IMR-90 (cell line): ENCODE measurements at regions of chr15 and their contacts with region 1.

Region 1: GRCh38 chr15:67839929-67840748 is at the start of gene RNU6-1:
- DNase-seq: peak; percentile 91
- ATAC-seq: peak; percentile 81
- H3K4me3 ChIP-seq: peak within 1 kb of the TSS; percentile 74
- H3K27ac ChIP-seq: peak within 1 kb of the TSS; percentile 96
- H3K4me1 ChIP-seq: peaks cover 15% of the 10 kb centered on the region; the same call in 1 of the 2 replicates
- H3K27me3 ChIP-seq: peaks cover 23% of the 10 kb centered on the region
- CTCF ChIP-seq: no peak
- POLR2A ChIP-seq: peak; percentile 49; the same call in 1 of the 2 replicates
- RAD21 ChIP-seq: no peak
- total RNA-seq, gene RNU6-1: not detected in 2 replicates

Region 2: DNA sequence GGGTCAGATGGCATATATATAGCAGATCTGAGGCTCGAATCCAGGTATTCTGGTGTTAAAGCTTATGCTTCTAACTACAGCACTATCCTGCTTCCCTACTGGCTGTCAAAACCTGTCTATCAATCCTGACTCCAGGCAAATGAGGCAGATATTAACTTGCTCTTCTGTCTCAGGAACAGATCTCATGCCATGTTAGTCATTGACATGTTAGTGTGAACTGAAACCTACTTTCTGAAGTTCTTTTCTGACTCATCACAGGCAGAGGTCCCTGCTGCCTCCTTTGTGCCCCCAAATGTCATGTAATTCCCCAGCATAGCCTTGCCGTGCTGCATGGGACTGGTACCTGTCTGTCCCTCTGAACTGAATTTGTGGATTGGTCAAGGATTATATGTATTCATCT is 899.8 kb before region 1 on chr15:
- CTCF ChIA-PET with region 1: no interaction called
- POLR2A ChIA-PET with region 1: no interaction called
- dilution Hi-C with region 1: no loop called
- in situ Hi-C with region 1: loop called (anchors 5 kb)
- intact Hi-C with region 1: no loop called
- DNase-seq: peak; percentile 62
- ATAC-seq: no peak; the same call in 1 of the 2 replicates
- H3K4me3 ChIP-seq: no peak overlapping the region
- H3K27ac ChIP-seq: no peak overlapping the region
- H3K4me1 ChIP-seq: peaks cover 13% of the 10 kb centered on the region; the same call in 1 of the 2 replicates
- H3K27me3 ChIP-seq: no peaks in the 10 kb centered on the region
- CTCF ChIP-seq: no peak
- POLR2A ChIP-seq: no peak
- RAD21 ChIP-seq: no peak

Region 3: GRCh38 chr15:67196672-67197363 is 643.3 kb before region 1 on chr15:
- CTCF ChIA-PET with region 1: no interaction called
- POLR2A ChIA-PET with region 1: no interaction called
- dilution Hi-C with region 1: no loop called
- in situ Hi-C with region 1: no loop called
- intact Hi-C with region 1: loop called (anchors 5 kb)
- DNase-seq: peak; percentile 93
- ATAC-seq: peak; percentile 44
- H3K4me3 ChIP-seq: no peak overlapping the region
- H3K27ac ChIP-seq: peak overlapping the region; percentile 72
- H3K4me1 ChIP-seq: peaks cover 41% of the 10 kb centered on the region
- H3K27me3 ChIP-seq: no peaks in the 10 kb centered on the region
- CTCF ChIP-seq: no peak
- POLR2A ChIP-seq: peak; percentile 56; the same call in 1 of the 2 replicates
- RAD21 ChIP-seq: no peak

Region 4: GRCh38 chr15:67456677-67457529 is 383.2 kb before region 1 on chr15:
- CTCF ChIA-PET with region 1: interaction called, 7 read pairs
- POLR2A ChIA-PET with region 1: interaction called, 14 read pairs
- dilution Hi-C with region 1: no loop called
- in situ Hi-C with region 1: loop called (anchors 5 kb)
- intact Hi-C with region 1: loop called (anchors 1 kb)
- DNase-seq: peak; percentile 59
- ATAC-seq: peak; percentile 97
- H3K4me3 ChIP-seq: no peak overlapping the region
- H3K27ac ChIP-seq: no peak overlapping the region
- H3K4me1 ChIP-seq: no peaks in the 10 kb centered on the region
- H3K27me3 ChIP-seq: peaks cover 15% of the 10 kb centered on the region
- CTCF ChIP-seq: peak; percentile 80
- POLR2A ChIP-seq: no peak
- RAD21 ChIP-seq: peak; percentile 81

Region 5: GRCh38 chr15:68053701-68054627 is 213.8 kb after region 1 on chr15 and contains the start of gene PIAS1:
- CTCF ChIA-PET with region 1: no interaction called
- POLR2A ChIA-PET with region 1: no interaction called
- dilution Hi-C with region 1: no loop called
- in situ Hi-C with region 1: no loop called
- intact Hi-C with region 1: loop called (anchors 1 kb)
- DNase-seq: peak; percentile 83
- ATAC-seq: peak; percentile 98
- H3K4me3 ChIP-seq: peak within 1 kb of the TSS; percentile 88
- H3K27ac ChIP-seq: peak within 1 kb of the TSS; percentile 57
- H3K4me1 ChIP-seq: no peaks in the 10 kb centered on the region; the same call in 1 of the 2 replicates
- H3K27me3 ChIP-seq: no peaks in the 10 kb centered on the region; the same call in 1 of the 2 replicates
- CTCF ChIP-seq: no peak
- POLR2A ChIP-seq: peak; percentile 74
- RAD21 ChIP-seq: no peak
- total RNA-seq, gene PIAS1: 41.1 and 63.6 TPM in 2 replicates

Region 6: DNA sequence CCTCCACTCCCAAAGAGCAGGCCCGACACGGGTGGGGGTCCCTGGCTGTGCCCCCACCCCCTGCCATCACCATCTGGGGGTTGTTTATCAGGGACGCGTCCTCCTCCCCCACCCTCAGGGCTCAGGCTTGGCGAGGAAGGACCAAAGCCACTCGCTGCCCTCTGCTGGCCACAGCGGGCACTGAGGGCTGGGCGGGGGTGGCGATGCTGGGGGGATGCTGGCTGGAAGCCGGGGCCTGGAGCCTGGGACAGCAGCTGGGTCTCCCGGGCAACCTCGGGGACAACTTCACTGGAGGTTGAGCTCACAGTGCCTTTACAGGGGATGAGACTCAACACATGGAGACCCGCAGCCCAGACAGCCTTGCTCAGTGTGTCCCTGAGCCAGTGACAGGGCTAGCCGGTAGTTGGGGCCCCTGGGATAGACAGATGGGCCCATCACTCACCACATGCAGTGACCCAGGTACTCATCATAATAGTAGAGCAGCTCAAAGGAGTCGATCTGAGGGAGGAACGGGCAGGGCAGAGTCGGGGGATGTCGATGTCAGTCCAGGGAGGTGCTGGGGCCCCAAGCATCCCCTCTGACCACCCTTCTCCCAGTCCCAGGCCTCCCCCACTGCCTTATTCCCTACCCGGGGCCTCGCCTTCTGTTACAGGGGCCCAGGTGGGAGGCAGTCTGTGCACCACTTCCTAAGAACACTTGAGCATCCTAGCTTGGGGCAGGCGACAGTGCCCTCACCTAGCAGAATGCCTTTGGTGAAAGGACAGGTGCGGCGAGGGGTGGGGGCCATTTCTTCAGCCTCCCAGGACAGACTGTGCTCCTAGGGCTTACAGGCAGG is 370.9 kb after region 1 on chr15:
- CTCF ChIA-PET with region 1: no interaction called
- POLR2A ChIA-PET with region 1: no interaction called
- dilution Hi-C with region 1: no loop called
- in situ Hi-C with region 1: no loop called
- intact Hi-C with region 1: loop called (anchors 2 kb)
- DNase-seq: peak; percentile 42
- ATAC-seq: peak; percentile 98
- H3K4me3 ChIP-seq: no peak overlapping the region
- H3K27ac ChIP-seq: peak overlapping the region; percentile 4; the same call in 1 of the 2 replicates
- H3K4me1 ChIP-seq: peaks cover 3% of the 10 kb centered on the region; the same call in 1 of the 2 replicates
- H3K27me3 ChIP-seq: no peaks in the 10 kb centered on the region
- CTCF ChIP-seq: peak; percentile 89
- POLR2A ChIP-seq: no peak
- RAD21 ChIP-seq: peak; percentile 75